Activated B cell treated with CpG ODN at 0.5 μM for 24 hours (primary cell): ENCODE measurements at regions of chr13 and their contacts with region 1.

Region 1: DNA sequence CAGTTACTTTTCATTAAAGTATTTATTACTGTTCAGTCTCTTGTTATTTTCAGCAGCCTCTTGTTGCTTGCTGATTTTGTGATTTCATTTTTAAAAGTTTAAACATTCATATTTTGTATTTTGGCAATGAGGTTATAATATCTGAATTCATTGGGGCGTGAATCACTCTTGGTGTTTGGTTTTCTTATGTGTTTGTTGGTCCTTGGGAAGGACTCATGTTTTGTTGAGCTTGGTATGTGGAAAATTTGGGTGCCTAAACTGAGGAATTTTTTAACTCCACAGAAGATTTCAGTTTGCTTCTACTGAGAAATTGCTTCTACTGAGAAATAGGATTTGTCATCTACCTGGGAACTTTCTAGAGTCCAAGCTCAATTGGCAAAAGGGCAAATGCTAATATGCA is 38.2 kb downstream of the PDS5B start:
- DNase-seq: no peak
- ATAC-seq: no peak
- H3K4me3 Mint-ChIP-seq: no peak overlapping the region
- H3K27ac Mint-ChIP-seq: no peak overlapping the region
- H3K4me1 Mint-ChIP-seq: peaks cover 32% of the 10 kb centered on the region
- H3K27me3 Mint-ChIP-seq: no peaks in the 10 kb centered on the region
- CTCF ChIP-seq: no peak

Region 2: GRCh38 chr13:32600890-32601289 is 23.6 kb before region 1 on chr13:
- CTCF ChIA-PET with region 1: no interaction called
- POLR2A ChIA-PET with region 1: no interaction called
- intact Hi-C with region 1: loop called (anchors 2 kb)
- DNase-seq: no peak
- ATAC-seq: no peak
- H3K4me3 Mint-ChIP-seq: no peak overlapping the region
- H3K27ac Mint-ChIP-seq: no peak overlapping the region
- H3K4me1 Mint-ChIP-seq: peaks cover 58% of the 10 kb centered on the region
- H3K27me3 Mint-ChIP-seq: no peaks in the 10 kb centered on the region
- CTCF ChIP-seq: no peak

Region 3: DNA sequence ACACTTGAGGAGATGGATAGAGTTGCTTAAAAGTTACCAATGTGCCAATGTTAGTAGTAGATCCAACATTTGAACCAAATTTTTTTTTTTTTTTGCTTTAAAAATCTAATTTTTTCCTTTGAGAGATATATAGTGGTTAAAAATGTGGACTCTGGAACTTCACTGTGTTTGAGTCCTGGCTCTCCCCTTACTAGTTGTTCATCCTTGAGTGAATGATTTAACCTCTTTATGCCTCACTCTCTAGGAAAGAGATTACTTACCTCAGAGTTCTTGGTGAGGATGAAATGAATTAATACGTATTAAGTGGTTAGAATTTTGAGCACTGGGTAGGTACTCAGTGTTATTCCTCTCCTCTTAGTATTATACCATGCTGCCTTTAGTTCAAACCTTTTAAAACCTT is 13.9 kb before region 1 on chr13:
- CTCF ChIA-PET with region 1: no interaction called
- POLR2A ChIA-PET with region 1: no interaction called
- intact Hi-C with region 1: loop called (anchors 2 kb)
- DNase-seq: no peak
- ATAC-seq: no peak
- H3K4me3 Mint-ChIP-seq: no peak overlapping the region
- H3K27ac Mint-ChIP-seq: no peak overlapping the region
- H3K4me1 Mint-ChIP-seq: peaks cover 48% of the 10 kb centered on the region
- H3K27me3 Mint-ChIP-seq: no peaks in the 10 kb centered on the region
- CTCF ChIP-seq: no peak